K562 (cell line): ENCODE measurements at regions of chr11 and their contacts with region 1.

Region 1: GRCh38 chr11:18526521-18527296 is at the start of gene TSG101:
- DNase-seq: peak; percentile 93 to 96 (median 93)
- ATAC-seq: peak; percentile 95
- H3K4me3 ChIP-seq: peak within 1 kb of the TSS; percentile 84
- H3K27ac ChIP-seq: peak within 1 kb of the TSS; percentile 97
- H3K4me1 ChIP-seq: no peaks in the 10 kb centered on the region; a peak in 1 of 5 replicates
- H3K27me3 ChIP-seq: no peaks in the 10 kb centered on the region
- CTCF ChIP-seq: no peak
- EP300 ChIP-seq: no peak
- POLR2A ChIP-seq: peak; percentile 98
- RAD21 ChIP-seq: no peak; a peak in 1 of 4 replicates
- polyA plus RNA-seq, gene TSG101: 24.6 to 30.0 TPM

Region 2: GRCh38 chr11:18235394-18236334 is 291.0 kb before region 1 on chr11:
- CTCF ChIA-PET with region 1: no interaction called
- POLR2A ChIA-PET with region 1: no interaction called
- in situ Hi-C with region 1: no loop called
- intact Hi-C with region 1: loop called (anchors 10 kb)
- DNase-seq: no peak
- ATAC-seq: no peak; the same call in 2 of the 3 replicates
- H3K4me3 ChIP-seq: no peak overlapping the region
- H3K27ac ChIP-seq: no peak overlapping the region
- H3K4me1 ChIP-seq: no peaks in the 10 kb centered on the region
- H3K27me3 ChIP-seq: peaks cover 10 to 16% of the 10 kb centered on the region in 2 experiments; a peak in 4 of 5 replicates
- CTCF ChIP-seq: no peak
- EP300 ChIP-seq: no peak
- POLR2A ChIP-seq: no peak
- RAD21 ChIP-seq: no peak

Region 3: DNA sequence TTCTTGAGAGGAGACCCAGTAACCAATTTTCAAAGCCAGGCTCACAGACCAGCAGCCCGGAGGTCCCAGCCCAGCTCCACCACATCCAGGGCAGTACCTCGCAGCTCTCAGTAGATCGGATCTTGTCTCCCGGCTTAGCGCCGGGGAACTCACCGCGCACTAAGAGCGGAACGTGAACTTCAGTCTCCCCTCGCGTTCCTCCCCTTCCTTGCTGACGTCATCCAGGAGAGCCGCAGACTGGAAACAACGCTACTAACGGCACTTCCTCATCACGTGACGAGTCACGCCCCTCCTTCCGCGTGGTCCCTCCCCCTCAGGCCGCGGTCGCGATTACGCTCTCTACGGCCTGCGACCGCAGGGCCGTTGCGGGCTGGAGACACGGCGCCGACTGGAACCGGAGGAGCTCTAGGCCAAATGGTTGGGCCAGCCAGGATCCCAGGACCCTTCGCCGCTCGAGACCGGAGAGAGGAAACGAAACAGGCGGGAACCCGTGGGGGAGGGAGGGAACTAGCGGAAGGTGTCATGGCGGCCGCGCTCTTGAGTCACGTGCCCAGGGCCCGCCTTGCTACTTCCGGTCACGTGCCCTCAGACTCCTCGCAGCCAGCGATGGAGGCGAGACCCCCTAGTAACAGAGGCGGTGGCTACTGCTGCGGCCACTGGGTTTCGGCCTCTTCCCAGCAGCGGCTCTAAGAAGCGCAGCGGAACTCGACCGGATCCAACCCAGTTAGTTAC is 204.6 kb before region 1 on chr11 and contains the starts of genes GTF2H1 and HPS5:
- CTCF ChIA-PET with region 1: no interaction called
- POLR2A ChIA-PET with region 1: interaction called, 3 read pairs
- in situ Hi-C with region 1: no loop called
- intact Hi-C with region 1: loop called (anchors 5 kb)
- DNase-seq: peak; percentile 95 to 99 (median 96)
- ATAC-seq: peak; percentile 86
- H3K4me3 ChIP-seq: peak within 1 kb of the TSS; percentile 59
- H3K27ac ChIP-seq: peak within 1 kb of the TSS; percentile 96
- H3K4me1 ChIP-seq: peaks cover 0 to 23% of the 10 kb centered on the region in 2 experiments; a peak in 3 of 5 replicates
- H3K27me3 ChIP-seq: no peaks in the 10 kb centered on the region; a peak in 1 of 5 replicates
- CTCF ChIP-seq: no peak
- EP300 ChIP-seq: no peak; the same call in 1 of the 2 replicates
- POLR2A ChIP-seq: peak; percentile 97
- RAD21 ChIP-seq: no peak
- polyA plus RNA-seq, gene GTF2H1: 92.1 to 126 TPM
- polyA plus RNA-seq, gene HPS5: 12.2 to 14.2 TPM

Region 4: DNA sequence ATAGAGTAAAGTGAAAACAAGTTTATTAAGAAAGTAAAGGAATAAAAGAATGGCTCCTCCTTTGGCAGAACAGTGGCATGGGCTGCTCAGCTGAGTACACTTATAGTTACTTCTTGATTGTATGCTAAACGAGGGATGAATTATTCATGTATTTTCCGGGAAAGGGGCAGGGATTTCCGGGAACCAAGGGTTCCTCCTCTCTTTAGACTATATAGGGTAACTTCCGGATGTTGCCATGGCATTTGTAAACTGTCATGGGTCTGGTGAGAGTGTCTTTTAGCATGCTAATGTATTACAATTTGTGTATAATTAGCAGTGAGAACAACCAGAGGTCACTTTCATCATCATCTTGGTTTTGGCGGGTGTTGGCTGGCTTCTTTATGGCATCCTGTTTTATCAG is 131.0 kb after region 1 on chr11:
- CTCF ChIA-PET with region 1: no interaction called
- POLR2A ChIA-PET with region 1: no interaction called
- in situ Hi-C with region 1: no loop called
- intact Hi-C with region 1: no loop called
- DNase-seq: peak in 1 of 4 experiments; percentile 18
- ATAC-seq: no peak
- H3K4me3 ChIP-seq: no peak overlapping the region
- H3K27ac ChIP-seq: no peak overlapping the region
- H3K4me1 ChIP-seq: no peaks in the 10 kb centered on the region; a peak in 1 of 5 replicates
- H3K27me3 ChIP-seq: no peaks in the 10 kb centered on the region
- CTCF ChIP-seq: no peak
- EP300 ChIP-seq: no peak
- POLR2A ChIP-seq: no peak
- RAD21 ChIP-seq: no peak